ENCODE measurements at regions of chr2 and their contacts with region 1.

Region 1: DNA sequence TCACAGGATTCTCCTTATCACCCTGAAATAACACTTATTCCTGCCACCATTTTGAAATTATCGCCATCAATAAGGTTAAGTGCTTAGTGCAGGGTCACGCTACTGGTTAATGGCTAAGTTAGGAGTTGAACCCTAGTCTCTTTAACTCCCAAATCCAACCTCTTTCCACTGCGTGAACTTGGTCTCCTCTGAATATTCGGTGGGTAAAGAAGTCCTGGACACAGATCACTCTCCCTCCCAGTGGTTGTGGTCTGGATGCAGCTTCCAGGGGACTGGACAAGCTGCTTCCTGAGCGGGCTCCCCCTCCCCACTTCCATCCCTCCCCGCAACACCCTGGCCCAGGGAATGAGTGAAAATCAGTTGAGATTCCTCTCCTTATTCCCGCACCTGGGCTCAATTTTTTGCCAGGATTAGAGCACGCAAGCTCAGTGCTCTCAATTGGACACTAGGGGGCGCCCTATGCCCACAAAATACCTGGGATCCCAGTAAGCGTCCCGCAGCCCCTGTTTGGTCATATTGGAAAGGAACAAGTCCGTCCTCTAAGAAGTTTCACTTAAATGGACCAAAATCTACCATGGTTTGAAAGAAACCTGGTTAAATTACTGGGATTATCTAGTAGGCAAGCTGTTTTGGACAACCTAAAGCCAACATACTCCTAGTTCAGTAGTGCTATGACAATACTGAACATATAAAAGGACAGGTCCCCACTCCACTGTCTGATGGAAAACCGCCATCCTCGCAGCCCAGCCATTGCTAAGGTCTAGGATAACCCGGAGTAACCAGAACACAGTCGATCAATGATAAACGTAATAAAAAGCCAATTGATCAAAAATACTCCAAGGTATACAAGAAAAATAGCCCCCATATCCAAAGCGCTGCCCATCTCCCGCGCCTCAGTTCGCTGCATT is 40.4 kb downstream of the DHRS9 start:
- DNase-seq: peak; percentile 62 to 85
- ATAC-seq: peak; percentile 33 to 60 (median 56)
- H3K4me3 ChIP-seq: no peak overlapping the region
- H3K4me3 Mint-ChIP-seq: no peak overlapping the region
- H3K27ac ChIP-seq: no peak overlapping the region
- H3K27ac Mint-ChIP-seq: no peak overlapping the region
- H3K4me1 ChIP-seq: peaks cover 37% of the 10 kb centered on the region
- H3K4me1 Mint-ChIP-seq: peaks cover 42 to 47% of the 10 kb centered on the region in 2 donors
- H3K27me3 ChIP-seq: no peaks in the 10 kb centered on the region
- H3K27me3 Mint-ChIP-seq: no peaks in the 10 kb centered on the region
- CTCF ChIP-seq: peak; percentile 88

Region 2: GRCh38 chr2:168976034-168976654 is 133.6 kb before region 1 on chr2:
- intact Hi-C with region 1: loop called (anchors 5 kb)
- DNase-seq: no peak
- ATAC-seq: peak in 1 of 3 donors; percentile 17
- H3K4me3 ChIP-seq: no peak overlapping the region
- H3K4me3 Mint-ChIP-seq: no peak overlapping the region
- H3K27ac ChIP-seq: no peak overlapping the region
- H3K27ac Mint-ChIP-seq: no peak overlapping the region
- H3K4me1 ChIP-seq: no peaks in the 10 kb centered on the region
- H3K4me1 Mint-ChIP-seq: peaks cover 0 to 5% of the 10 kb centered on the region in 2 donors
- H3K27me3 ChIP-seq: no peaks in the 10 kb centered on the region
- H3K27me3 Mint-ChIP-seq: no peaks in the 10 kb centered on the region
- CTCF ChIP-seq: no peak

Region 3: GRCh38 chr2:169095621-169096105 is 14.1 kb before region 1 on chr2:
- intact Hi-C with region 1: no loop called
- DNase-seq: no peak
- ATAC-seq: peak in 2 of 3 donors; percentile 48 to 52
- H3K4me3 ChIP-seq: no peak overlapping the region
- H3K4me3 Mint-ChIP-seq: no peak overlapping the region
- H3K27ac ChIP-seq: no peak overlapping the region
- H3K27ac Mint-ChIP-seq: no peak overlapping the region
- H3K4me1 ChIP-seq: no peaks in the 10 kb centered on the region
- H3K4me1 Mint-ChIP-seq: peaks cover 11 to 13% of the 10 kb centered on the region in 2 donors
- H3K27me3 ChIP-seq: no peaks in the 10 kb centered on the region
- H3K27me3 Mint-ChIP-seq: no peaks in the 10 kb centered on the region
- CTCF ChIP-seq: no peak

Region 4: GRCh38 chr2:169141713-169142352 is 32.1 kb after region 1 on chr2:
- intact Hi-C with region 1: loop called (anchors 1 kb)
- DNase-seq: peak; percentile 40 to 81
- ATAC-seq: peak; percentile 50 to 77 (median 76)
- H3K4me3 ChIP-seq: no peak overlapping the region
- H3K4me3 Mint-ChIP-seq: no peak overlapping the region
- H3K27ac ChIP-seq: no peak overlapping the region
- H3K27ac Mint-ChIP-seq: no peak overlapping the region
- H3K4me1 ChIP-seq: no peaks in the 10 kb centered on the region
- H3K4me1 Mint-ChIP-seq: no peaks in the 10 kb centered on the region
- H3K27me3 ChIP-seq: no peaks in the 10 kb centered on the region
- H3K27me3 Mint-ChIP-seq: no peaks in the 10 kb centered on the region
- CTCF ChIP-seq: peak; percentile 94

Measured in natural killer cell (primary cell).